Gastrocnemius medialis (tissue), 4 donors: ENCODE measurements at regions of chr3 and their contacts with region 1.

Region 1: GRCh38 chr3:30779686-30780287 is 114.7 kb downstream of the GADL1 start:
- DNase-seq: no peak
- ATAC-seq: peak; percentile 82 to 89
- H3K4me3 ChIP-seq: no peak overlapping the region
- H3K27ac ChIP-seq: no peak overlapping the region
- H3K4me1 ChIP-seq: peaks cover 0 to 1% of the 10 kb centered on the region in 2 donors
- H3K27me3 ChIP-seq: no peaks in the 10 kb centered on the region
- CTCF ChIP-seq: peak; percentile 36 to 68 (median 60)
- POLR2A ChIP-seq: no peak

Region 2: GRCh38 chr3:30747771-30748281 is 32.0 kb before region 1 on chr3:
- in situ Hi-C with region 1: no loop called
- intact Hi-C with region 1: no loop called
- DNase-seq: no peak
- ATAC-seq: no peak
- H3K4me3 ChIP-seq: no peak overlapping the region
- H3K27ac ChIP-seq: no peak overlapping the region
- H3K4me1 ChIP-seq: peaks cover 20 to 25% of the 10 kb centered on the region in 2 donors
- H3K27me3 ChIP-seq: no peaks in the 10 kb centered on the region
- CTCF ChIP-seq: peak in 3 of 5 experiments; percentile 16 to 38 (median 38)
- POLR2A ChIP-seq: no peak

Region 3: GRCh38 chr3:30871720-30872119 is 91.9 kb after region 1 on chr3:
- in situ Hi-C with region 1: no loop called
- intact Hi-C with region 1: loop called (anchors 5 kb)
- DNase-seq: no peak
- ATAC-seq: no peak
- H3K4me3 ChIP-seq: no peak overlapping the region
- H3K27ac ChIP-seq: peak overlapping the region in 2 of 4 donors; percentile 48 to 81
- H3K4me1 ChIP-seq: peaks cover 30 to 54% of the 10 kb centered on the region in 2 donors
- H3K27me3 ChIP-seq: no peaks in the 10 kb centered on the region
- CTCF ChIP-seq: no peak
- POLR2A ChIP-seq: no peak

Region 4: GRCh38 chr3:30886888-30887287 is 107.1 kb after region 1 on chr3:
- in situ Hi-C with region 1: loop called in 1 of 4 experiments (anchors 10 kb)
- intact Hi-C with region 1: loop called (anchors 5 kb)
- DNase-seq: no peak
- ATAC-seq: no peak
- H3K4me3 ChIP-seq: no peak overlapping the region
- H3K27ac ChIP-seq: no peak overlapping the region
- H3K4me1 ChIP-seq: peaks cover 5 to 6% of the 10 kb centered on the region in 2 donors
- H3K27me3 ChIP-seq: no peaks in the 10 kb centered on the region
- CTCF ChIP-seq: no peak
- POLR2A ChIP-seq: no peak

Region 5: DNA sequence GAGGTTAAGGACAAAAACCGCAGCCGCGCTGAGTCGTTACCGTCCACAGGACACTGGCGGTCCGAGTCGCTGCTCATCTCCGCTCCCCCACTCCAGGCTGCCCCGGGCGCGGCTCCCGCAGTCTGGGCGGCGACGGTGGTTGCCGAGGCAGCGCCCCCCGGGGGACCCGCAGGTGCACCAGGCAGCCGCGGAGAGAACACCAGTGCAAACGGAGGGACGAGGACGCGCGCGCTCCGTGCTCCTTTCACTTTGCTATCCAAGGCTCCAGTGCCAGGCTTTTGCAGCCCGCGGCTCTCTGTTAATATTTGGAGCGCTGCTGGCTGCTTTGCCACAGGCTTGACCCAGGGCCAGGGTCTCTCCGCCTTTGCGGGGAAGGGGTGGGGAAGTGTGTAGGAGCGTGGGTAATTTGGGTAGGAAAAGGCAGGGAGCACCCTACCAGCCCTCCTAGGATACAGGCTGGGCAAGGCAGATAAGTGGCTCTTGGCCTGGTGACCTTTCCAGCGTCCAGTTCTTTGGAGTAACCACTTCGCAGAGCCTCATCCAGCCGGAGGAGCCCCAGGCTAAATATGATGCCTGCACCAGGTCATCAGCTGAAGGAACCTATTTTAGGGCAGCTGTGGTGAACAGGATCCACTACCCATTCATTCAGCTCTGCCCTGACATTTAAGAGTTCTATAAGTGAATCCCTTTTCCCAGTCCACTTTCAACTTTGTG is 114.9 kb after region 1 on chr3 and contains the start of gene GADL1:
- in situ Hi-C with region 1: loop called in 1 of 4 experiments (anchors 10 kb)
- intact Hi-C with region 1: loop called (anchors 5 kb)
- DNase-seq: peak; percentile 32 to 60
- ATAC-seq: peak; percentile 90 to 93
- H3K4me3 ChIP-seq: peak within 1 kb of the TSS; percentile 81 to 87 (median 82)
- H3K27ac ChIP-seq: peak within 1 kb of the TSS; percentile 80 to 88 (median 84)
- H3K4me1 ChIP-seq: peaks cover 8 to 12% of the 10 kb centered on the region in 2 donors
- H3K27me3 ChIP-seq: no peaks in the 10 kb centered on the region
- CTCF ChIP-seq: peak in 1 of 5 experiments; percentile 14
- POLR2A ChIP-seq: no peak
- total RNA-seq, gene GADL1: 0.13 to 0.55 (median 0.42) TPM

Region 6: DNA sequence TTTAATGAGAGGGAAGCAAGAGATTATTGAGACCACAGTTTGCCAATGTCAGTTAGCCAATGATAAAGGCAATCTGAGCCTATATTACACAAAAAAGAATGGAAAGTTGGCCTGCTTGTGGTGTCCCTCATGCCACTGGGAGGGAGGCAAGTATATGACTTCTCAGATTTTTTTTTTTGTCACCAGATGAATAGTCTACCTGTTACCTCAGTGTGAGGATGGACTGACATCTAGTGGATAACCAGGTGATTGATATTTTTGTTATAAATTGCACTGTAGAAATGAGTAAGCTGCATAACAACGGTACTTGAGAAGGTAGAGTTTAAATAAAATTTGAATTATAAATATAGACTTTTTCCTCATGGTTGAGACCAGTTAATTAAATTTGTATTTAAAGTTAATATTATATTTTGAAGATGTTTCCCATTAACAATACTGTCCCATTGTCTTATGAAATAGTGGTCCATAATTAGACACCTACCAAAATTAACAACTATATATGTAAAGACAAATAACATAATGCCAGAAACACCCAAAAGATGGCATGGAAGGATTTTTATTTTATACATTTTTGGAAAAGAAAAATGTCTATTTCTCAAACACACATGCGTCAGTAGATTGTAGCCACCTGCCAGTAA is 352.5 kb after region 1 on chr3:
- in situ Hi-C with region 1: loop called in 2 of 4 experiments (anchors 5 kb)
- intact Hi-C with region 1: no loop called
- DNase-seq: no peak
- ATAC-seq: peak; percentile 74 to 87
- H3K4me3 ChIP-seq: no peak overlapping the region
- H3K27ac ChIP-seq: no peak overlapping the region
- H3K4me1 ChIP-seq: no peaks in the 10 kb centered on the region
- H3K27me3 ChIP-seq: no peaks in the 10 kb centered on the region
- CTCF ChIP-seq: peak; percentile 41 to 77 (median 72)
- POLR2A ChIP-seq: no peak

Region 7: GRCh38 chr3:31432897-31433678 is 653.3 kb after region 1 on chr3:
- in situ Hi-C with region 1: no loop called
- intact Hi-C with region 1: no loop called
- DNase-seq: no peak
- ATAC-seq: no peak
- H3K4me3 ChIP-seq: no peak overlapping the region
- H3K27ac ChIP-seq: no peak overlapping the region
- H3K4me1 ChIP-seq: no peaks in the 10 kb centered on the region
- H3K27me3 ChIP-seq: no peaks in the 10 kb centered on the region
- CTCF ChIP-seq: no peak
- POLR2A ChIP-seq: no peak

Region 8: GRCh38 chr3:31768479-31769123 is 988.8 kb after region 1 on chr3:
- in situ Hi-C with region 1: loop called in 1 of 4 experiments (anchors 25 kb)
- intact Hi-C with region 1: no loop called
- DNase-seq: peak; percentile 16 to 45
- ATAC-seq: peak; percentile 74 to 90
- H3K4me3 ChIP-seq: no peak overlapping the region
- H3K27ac ChIP-seq: no peak overlapping the region
- H3K4me1 ChIP-seq: no peaks in the 10 kb centered on the region
- H3K27me3 ChIP-seq: no peaks in the 10 kb centered on the region
- CTCF ChIP-seq: peak; percentile 57 to 63 (median 59)
- POLR2A ChIP-seq: no peak